Sigmoid colon (tissue), 7 donors: ENCODE measurements at regions of chr20 and their contacts with region 1.

Region 1: GRCh38 chr20:2451939-2452732 is 18.5 kb downstream of the SNRPB start:
- DNase-seq: peak; percentile 79
- H3K4me3 ChIP-seq: no peak overlapping the region
- H3K27ac ChIP-seq: no peak overlapping the region
- H3K4me1 ChIP-seq: no peaks in the 10 kb centered on the region
- H3K27me3 ChIP-seq: no peaks in the 10 kb centered on the region
- CTCF ChIP-seq: peak; percentile 8 to 75 (median 49)
- EP300 ChIP-seq: no peak
- POLR2A ChIP-seq: no peak

Region 2: GRCh38 chr20:2206957-2207769 is 245.0 kb before region 1 on chr20:
- intact Hi-C with region 1: loop called (anchors 5 kb)
- DNase-seq: peak; percentile 79
- H3K4me3 ChIP-seq: peak overlapping the region; percentile 24 to 60 (median 47)
- H3K27ac ChIP-seq: no peak overlapping the region
- H3K4me1 ChIP-seq: peaks cover 0 to 16% (median 13%) of the 10 kb centered on the region in 4 donors
- H3K27me3 ChIP-seq: peaks cover 8 to 63% (median 13%) of the 10 kb centered on the region in 3 donors
- CTCF ChIP-seq: peak in 3 of 4 experiments; percentile 22 to 49 (median 29)
- EP300 ChIP-seq: no peak
- POLR2A ChIP-seq: no peak

Region 3: DNA sequence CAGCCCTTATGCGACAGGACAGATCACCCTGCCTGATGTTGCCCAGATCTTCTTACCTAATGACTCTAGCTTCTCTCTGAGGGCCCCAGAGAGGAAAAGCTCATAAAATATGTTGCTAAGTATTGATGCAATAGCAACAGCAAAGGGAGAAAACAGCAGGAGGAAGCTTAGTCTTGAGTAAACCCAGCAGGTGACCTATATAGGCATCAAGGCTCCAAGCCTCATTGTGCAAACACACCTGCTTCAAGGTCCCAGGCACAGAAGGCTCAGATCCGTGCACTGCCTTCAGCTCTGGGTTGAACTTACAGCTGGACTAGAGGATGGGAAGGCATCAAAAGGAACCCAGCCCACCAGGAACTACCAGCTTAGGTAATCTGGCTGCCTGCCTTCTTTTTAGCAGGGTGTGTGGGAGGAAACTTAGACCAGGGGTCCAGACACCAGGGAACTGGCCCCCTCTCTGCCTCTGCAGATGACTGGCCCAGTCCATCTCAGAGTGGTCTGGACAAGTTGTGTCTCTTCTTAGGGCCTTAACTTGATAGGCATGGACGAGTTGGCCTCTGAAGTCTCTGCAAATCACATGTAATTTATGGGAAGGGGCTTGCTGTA is 121.9 kb before region 1 on chr20:
- intact Hi-C with region 1: no loop called
- DNase-seq: no peak
- H3K4me3 ChIP-seq: no peak overlapping the region
- H3K27ac ChIP-seq: no peak overlapping the region
- H3K4me1 ChIP-seq: no peaks in the 10 kb centered on the region
- H3K27me3 ChIP-seq: no peaks in the 10 kb centered on the region
- CTCF ChIP-seq: no peak
- EP300 ChIP-seq: no peak
- POLR2A ChIP-seq: no peak

Region 4: GRCh38 chr20:2900845-2901592 is 448.9 kb after region 1 on chr20:
- intact Hi-C with region 1: no loop called
- DNase-seq: no peak
- H3K4me3 ChIP-seq: no peak overlapping the region
- H3K27ac ChIP-seq: no peak overlapping the region
- H3K4me1 ChIP-seq: peaks cover 0 to 4% (median 0%) of the 10 kb centered on the region in 4 donors
- H3K27me3 ChIP-seq: no peaks in the 10 kb centered on the region
- CTCF ChIP-seq: no peak
- EP300 ChIP-seq: no peak
- POLR2A ChIP-seq: no peak